Thyroid gland (tissue), 4 donors: ENCODE measurements at regions of chr3 and their contacts with region 1.

Region 1: DNA sequence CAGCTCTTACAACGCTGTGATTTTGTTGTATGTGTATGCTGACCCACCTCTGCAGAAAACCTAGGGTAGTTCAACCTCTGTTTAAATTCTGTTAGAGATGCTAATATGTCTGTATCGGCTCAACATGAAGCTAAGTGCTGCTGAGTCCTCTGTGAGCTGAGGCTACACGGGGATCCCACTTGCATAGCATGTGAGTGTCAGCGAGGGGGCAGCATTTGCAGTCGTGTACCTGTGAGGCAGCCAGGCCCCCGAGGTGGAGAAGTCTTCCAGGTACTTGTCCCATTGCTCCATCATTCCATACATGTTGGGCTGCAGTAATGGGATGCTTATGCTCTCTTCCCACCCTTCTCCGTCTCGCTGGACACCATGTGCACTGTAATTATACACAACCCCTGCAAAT is 3.7 kb downstream of the MKRN2OS start:
- DNase-seq: peak; percentile 39 to 52
- H3K4me3 ChIP-seq: no peak overlapping the region
- H3K27ac ChIP-seq: no peak overlapping the region
- H3K4me1 ChIP-seq: no peaks in the 10 kb centered on the region
- H3K27me3 ChIP-seq: no peaks in the 10 kb centered on the region
- CTCF ChIP-seq: peak in 3 of 6 experiments; percentile 11 to 36 (median 28)
- POLR2A ChIP-seq: no peak

Region 2: DNA sequence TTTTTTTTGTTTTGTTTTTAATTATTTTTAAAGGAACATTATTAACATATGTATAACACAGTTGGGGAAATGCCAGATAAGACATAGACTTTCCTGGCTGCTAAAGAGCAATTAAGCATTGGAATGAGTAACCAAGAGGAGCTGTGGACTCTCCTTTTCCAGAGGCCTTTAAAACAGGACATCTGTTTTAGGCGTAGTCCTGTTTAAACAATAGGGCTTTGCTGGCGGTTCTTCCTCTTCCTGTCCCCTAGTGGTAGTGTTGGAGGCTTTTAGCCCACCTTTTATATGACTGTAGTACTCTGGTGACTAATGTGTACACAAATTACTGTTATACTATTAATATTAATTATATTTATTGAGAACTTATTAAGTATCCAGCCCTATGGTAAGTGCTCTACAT is 170.9 kb before region 1 on chr3:
- intact Hi-C with region 1: no loop called
- DNase-seq: no peak
- H3K4me3 ChIP-seq: no peak overlapping the region
- H3K27ac ChIP-seq: no peak overlapping the region
- H3K4me1 ChIP-seq: peaks cover 11 to 13% of the 10 kb centered on the region in 2 donors
- H3K27me3 ChIP-seq: no peaks in the 10 kb centered on the region
- CTCF ChIP-seq: no peak
- POLR2A ChIP-seq: no peak

Region 3: DNA sequence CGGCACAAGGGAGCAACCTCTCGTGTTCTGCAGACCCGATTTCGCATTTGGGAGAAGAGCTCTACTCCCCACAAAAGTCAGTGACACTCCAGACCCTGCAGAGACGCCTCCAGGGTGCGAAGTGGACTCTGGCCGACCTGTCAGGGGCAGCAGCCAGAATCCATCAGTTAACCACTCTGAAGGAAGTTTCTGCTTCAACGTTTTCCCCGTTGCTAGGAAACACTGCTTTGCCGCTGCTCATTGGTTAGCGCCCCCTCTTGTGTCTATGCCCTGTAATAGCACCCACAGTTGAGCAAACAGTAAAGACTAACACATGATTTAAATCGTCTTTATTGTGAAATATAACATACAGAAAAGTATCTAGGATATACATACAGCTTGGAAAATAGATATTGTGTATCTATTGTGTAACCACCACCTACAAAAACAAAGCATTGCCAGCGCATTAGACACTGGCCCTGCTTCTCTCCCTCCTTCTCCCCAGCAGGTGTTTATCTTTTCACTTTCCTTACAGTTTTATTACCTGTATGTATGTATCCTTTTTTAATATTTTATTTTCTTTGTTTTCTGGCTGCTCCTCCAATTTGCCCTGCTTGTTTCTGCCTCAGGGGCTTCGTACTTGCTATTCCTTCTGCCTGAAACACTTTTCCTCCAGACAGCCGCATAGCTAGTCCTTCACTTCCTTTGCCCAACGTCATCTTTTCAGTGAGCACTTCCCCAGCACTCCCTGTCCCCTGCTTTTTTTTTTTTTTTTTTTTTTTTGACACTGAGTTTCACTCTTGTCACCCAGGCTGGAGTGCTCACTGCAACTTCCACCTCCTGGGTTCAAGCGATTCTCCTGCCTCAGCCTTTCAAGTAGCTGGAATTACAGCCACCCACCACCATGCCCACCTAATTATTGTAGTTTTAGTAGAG is 178.6 kb after region 1 on chr3:
- intact Hi-C with region 1: loop called (anchors 10 kb)
- DNase-seq: peak; percentile 69 to 71
- H3K4me3 ChIP-seq: no peak overlapping the region
- H3K27ac ChIP-seq: no peak overlapping the region
- H3K4me1 ChIP-seq: no peaks in the 10 kb centered on the region
- H3K27me3 ChIP-seq: no peaks in the 10 kb centered on the region
- CTCF ChIP-seq: peak; percentile 68 to 93 (median 90)
- POLR2A ChIP-seq: no peak